Common myeloid progenitor, CD34-positive (primary cell): ENCODE measurements at regions of chr19 and their contacts with region 1.

Region 1: GRCh38 chr19:18179957-18180356 is 6.3 kb downstream of the IFI30 start:
- DNase-seq: peak in 2 of 3 donors; percentile 61 to 65
- H3K4me3 ChIP-seq: no peak overlapping the region
- H3K27ac ChIP-seq: no peak overlapping the region
- H3K4me1 ChIP-seq: peaks cover 0 to 23% (median 11%) of the 10 kb centered on the region in 4 experiments
- H3K27me3 ChIP-seq: no peaks in the 10 kb centered on the region

Region 2: DNA sequence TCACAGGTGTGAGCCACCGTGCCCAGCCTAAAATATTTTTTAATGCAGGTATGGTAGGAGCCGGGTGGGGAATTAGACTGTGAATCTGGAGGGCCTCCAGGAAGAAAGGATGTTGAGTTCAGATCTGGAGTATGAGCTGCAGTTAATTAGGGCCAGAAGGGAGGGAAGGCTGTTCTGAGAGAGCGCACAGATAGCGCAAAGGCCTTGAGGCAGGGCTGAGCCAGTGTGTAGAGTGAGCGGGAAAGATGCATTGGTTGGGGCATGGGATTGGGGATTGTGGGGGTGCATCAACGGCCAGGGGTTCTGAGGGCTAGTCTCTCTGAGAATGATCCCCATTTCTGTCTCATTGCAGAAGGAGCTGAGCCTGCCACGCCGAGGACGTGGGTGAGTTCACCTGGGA is 72.7 kb before region 1 on chr19:
- CTCF ChIA-PET with region 1: no interaction called
- POLR2A ChIA-PET with region 1: no interaction called
- DNase-seq: no peak
- H3K4me3 ChIP-seq: no peak overlapping the region
- H3K27ac ChIP-seq: no peak overlapping the region
- H3K4me1 ChIP-seq: peaks cover 0 to 44% (median 30%) of the 10 kb centered on the region in 4 experiments
- H3K27me3 ChIP-seq: no peaks in the 10 kb centered on the region

Region 3: GRCh38 chr19:18167975-18168645 is 11.8 kb before region 1 on chr19:
- CTCF ChIA-PET with region 1: interaction called, 6 read pairs
- POLR2A ChIA-PET with region 1: interaction called, 10 read pairs
- DNase-seq: peak; percentile 63 to 79 (median 74)
- H3K4me3 ChIP-seq: no peak overlapping the region
- H3K27ac ChIP-seq: no peak overlapping the region
- H3K4me1 ChIP-seq: peaks cover 0 to 18% (median 12%) of the 10 kb centered on the region in 4 experiments
- H3K27me3 ChIP-seq: no peaks in the 10 kb centered on the region